HCT116 (cell line): ENCODE measurements at regions of chr9 and their contacts with region 1.

Region 1: DNA sequence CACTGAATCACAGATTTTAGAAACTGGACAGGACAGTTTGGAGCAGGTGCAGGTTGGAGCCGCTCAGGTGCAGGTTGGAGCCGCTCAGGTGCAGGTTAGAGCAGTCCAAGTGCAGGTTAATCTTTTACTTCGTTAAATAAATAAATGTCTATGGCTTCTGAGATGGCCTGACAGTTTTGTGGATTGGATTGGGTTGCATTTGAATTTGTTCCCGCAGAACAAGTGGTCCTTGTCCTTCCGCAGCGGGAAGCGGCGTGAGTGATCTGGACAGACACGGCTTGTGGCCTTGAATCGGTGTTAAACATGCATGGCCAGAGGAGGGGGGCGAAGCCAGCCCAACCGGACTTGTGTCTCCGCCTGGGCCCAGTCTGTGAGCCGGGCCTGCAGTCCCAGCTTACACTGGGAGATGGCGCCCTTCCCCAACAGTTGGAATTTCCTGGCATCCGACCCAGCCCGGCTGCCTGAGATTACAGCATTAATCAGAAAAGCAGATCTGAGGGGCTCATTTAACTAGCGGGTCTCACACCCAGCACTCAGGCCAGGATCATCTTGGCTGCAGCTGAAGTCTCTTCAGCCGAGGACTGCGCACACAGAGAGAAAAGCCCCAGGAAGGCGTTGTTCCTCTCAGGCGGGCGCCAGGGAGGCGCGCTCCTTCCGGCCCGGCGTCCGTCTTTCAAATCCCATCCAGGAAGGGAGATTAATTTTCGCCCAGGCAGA is 1.5 kb upstream of the OLFM1 start:
- DNase-seq: peak; percentile 54
- ATAC-seq: peak; percentile 77
- H3K4me3 ChIP-seq: peak overlapping the region in 1 of 2 experiments; percentile 15; a peak in 1 of 4 replicates
- H3K27ac ChIP-seq: no peak overlapping the region
- H3K4me1 ChIP-seq: peaks cover 4 to 5% of the 10 kb centered on the region in 2 experiments; a peak in 2 of 4 replicates
- H3K27me3 ChIP-seq: peaks cover 20% of the 10 kb centered on the region; the same call in 1 of the 2 replicates
- CTCF ChIP-seq: peak; percentile 92 to 98 (median 95)
- POLR2A ChIP-seq: no peak
- RAD21 ChIP-seq: peak; percentile 98

Region 2: GRCh38 chr9:135037521-135038250 is 48.3 kb before region 1 on chr9:
- CTCF ChIA-PET with region 1: no interaction called
- POLR2A ChIA-PET with region 1: no interaction called
- RAD21 ChIA-PET with region 1: no interaction called
- intact Hi-C with region 1: no loop called
- DNase-seq: no peak
- ATAC-seq: no peak
- H3K4me3 ChIP-seq: no peak overlapping the region
- H3K27ac ChIP-seq: no peak overlapping the region
- H3K4me1 ChIP-seq: no peaks in the 10 kb centered on the region
- H3K27me3 ChIP-seq: peaks cover 47% of the 10 kb centered on the region
- CTCF ChIP-seq: no peak
- POLR2A ChIP-seq: no peak
- RAD21 ChIP-seq: no peak

Region 3: DNA sequence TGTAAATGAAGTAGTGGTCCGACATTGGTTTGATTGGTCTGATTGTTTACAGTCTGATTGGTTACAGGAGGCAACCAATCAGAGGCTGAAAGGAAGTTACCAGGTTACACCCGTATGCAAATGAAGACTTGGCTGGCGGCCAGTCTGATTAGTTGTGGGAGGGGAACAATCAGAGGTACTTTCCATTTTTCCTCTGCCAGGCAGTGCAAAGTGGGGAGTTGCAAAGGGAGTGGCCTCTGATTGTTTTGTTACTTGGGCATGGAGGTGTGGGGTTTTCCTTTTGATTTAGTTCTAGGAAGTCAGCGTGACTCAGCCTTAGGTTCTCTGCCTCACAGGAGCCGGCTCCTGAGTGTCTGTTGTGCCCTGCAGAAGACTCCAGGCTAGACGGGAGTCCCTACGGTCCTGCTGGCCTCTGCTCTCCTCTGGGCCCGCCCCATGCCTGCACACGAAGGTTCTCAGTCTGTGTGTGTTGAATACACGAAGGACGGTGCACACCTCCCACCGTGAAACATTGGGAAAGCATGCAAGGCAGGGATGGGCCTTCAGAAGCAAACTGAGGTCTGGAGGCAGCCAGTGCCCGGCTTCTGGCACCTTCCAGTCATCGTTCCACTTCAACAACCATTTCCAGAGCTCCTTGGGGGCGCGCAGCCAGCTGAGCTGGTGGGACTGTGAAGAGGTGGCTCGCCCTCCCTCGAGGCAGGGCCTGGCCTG is 44.4 kb after region 1 on chr9:
- CTCF ChIA-PET with region 1: no interaction called
- POLR2A ChIA-PET with region 1: no interaction called
- RAD21 ChIA-PET with region 1: no interaction called
- intact Hi-C with region 1: no loop called
- DNase-seq: peak; percentile 63
- ATAC-seq: peak; percentile 68
- H3K4me3 ChIP-seq: no peak overlapping the region
- H3K27ac ChIP-seq: peak overlapping the region; percentile 2; the same call in 1 of the 2 replicates
- H3K4me1 ChIP-seq: peaks cover 7 to 26% of the 10 kb centered on the region in 2 experiments; a peak in 3 of 4 replicates
- H3K27me3 ChIP-seq: no peaks in the 10 kb centered on the region
- CTCF ChIP-seq: no peak
- POLR2A ChIP-seq: no peak
- RAD21 ChIP-seq: no peak

Region 4: GRCh38 chr9:135166566-135166965 is 80.6 kb after region 1 on chr9:
- CTCF ChIA-PET with region 1: no interaction called
- POLR2A ChIA-PET with region 1: no interaction called
- RAD21 ChIA-PET with region 1: no interaction called
- intact Hi-C with region 1: loop called (anchors 1 kb)
- DNase-seq: peak; percentile 7
- ATAC-seq: peak; percentile 77
- H3K4me3 ChIP-seq: no peak overlapping the region
- H3K27ac ChIP-seq: no peak overlapping the region
- H3K4me1 ChIP-seq: peaks cover 2 to 10% of the 10 kb centered on the region in 2 experiments; a peak in 2 of 4 replicates
- H3K27me3 ChIP-seq: peaks cover 41% of the 10 kb centered on the region
- CTCF ChIP-seq: peak; percentile 35 to 48 (median 37); a peak in 5 of 6 replicates
- POLR2A ChIP-seq: no peak
- RAD21 ChIP-seq: peak; percentile 33; the same call in 1 of the 2 replicates

Region 5: DNA sequence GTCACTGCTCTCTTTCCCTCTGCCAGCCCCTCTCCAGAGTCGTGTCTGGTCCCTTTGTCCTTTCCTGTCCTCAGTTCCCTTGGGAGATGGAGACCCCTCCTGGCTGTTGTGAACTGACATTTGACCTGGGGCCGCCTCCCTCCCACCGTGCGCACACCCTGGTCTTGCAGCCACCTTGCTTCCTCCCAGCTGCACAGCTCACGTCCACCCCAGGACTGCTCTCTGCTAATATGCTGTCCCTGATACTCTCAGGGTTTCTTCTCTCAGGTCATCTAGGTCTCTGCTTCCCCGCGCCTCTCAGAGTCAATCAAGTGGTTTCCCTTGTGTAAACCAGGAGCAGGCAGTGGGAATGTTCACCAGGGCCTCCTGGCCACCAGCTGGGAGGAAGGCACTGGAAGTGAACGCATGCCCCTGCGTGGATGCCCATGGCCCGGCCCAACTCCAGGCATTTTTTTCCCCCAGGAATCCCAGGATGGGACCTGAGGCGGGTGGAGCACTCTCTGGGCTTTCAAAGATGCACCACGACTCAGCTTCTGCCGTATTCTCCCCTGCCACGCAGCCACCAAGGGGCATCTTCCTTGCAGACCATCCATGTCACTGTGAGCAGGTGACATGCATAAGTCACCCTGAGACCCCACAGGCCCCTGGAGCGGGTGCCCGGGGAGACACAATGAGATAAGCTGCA is 143.9 kb after region 1 on chr9:
- CTCF ChIA-PET with region 1: no interaction called
- POLR2A ChIA-PET with region 1: no interaction called
- RAD21 ChIA-PET with region 1: no interaction called
- intact Hi-C with region 1: no loop called
- DNase-seq: no peak
- ATAC-seq: no peak
- H3K4me3 ChIP-seq: no peak overlapping the region
- H3K27ac ChIP-seq: no peak overlapping the region
- H3K4me1 ChIP-seq: no peaks in the 10 kb centered on the region
- H3K27me3 ChIP-seq: peaks cover 42% of the 10 kb centered on the region; the same call in 1 of the 2 replicates
- CTCF ChIP-seq: no peak
- POLR2A ChIP-seq: no peak
- RAD21 ChIP-seq: no peak

Region 6: DNA sequence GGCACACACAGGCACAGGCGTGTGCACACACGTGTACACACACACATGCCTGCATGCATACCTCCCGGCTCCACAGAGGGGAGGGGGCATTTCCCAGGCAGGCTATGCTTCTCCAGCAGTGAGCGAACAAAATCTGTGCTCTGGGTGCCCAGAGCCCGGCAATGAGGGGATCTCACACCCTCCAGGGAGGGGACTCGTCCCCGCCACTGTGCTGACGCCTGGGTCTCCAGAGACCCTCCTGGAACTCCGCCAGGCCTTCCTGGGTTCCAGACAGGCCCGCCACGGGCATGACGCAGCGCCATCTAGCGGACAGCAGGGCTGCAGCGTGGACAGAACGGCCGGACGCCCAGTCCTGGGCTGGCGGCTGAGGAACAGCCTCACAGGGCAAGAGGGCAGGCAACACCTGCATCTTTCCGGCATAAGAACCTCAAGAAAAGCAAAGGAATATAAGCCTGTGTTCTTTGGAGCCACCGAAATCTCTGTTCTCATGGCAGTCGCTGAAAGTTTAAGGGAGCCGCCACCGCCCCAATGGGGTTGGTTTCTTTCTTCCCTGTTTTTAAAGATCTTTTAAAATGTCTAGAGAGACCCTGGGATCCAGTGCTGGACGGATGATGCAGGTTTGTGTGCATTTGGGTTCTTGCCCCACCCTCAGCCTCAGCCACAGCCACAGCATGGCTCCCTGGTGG is 258.0 kb after region 1 on chr9:
- CTCF ChIA-PET with region 1: interaction called, 3 read pairs
- POLR2A ChIA-PET with region 1: no interaction called
- RAD21 ChIA-PET with region 1: no interaction called
- intact Hi-C with region 1: loop called (anchors 1 kb)
- DNase-seq: peak; percentile 10
- ATAC-seq: peak; percentile 92
- H3K4me3 ChIP-seq: no peak overlapping the region
- H3K27ac ChIP-seq: no peak overlapping the region
- H3K4me1 ChIP-seq: no peaks in the 10 kb centered on the region
- H3K27me3 ChIP-seq: no peaks in the 10 kb centered on the region
- CTCF ChIP-seq: peak; percentile 92 to 99 (median 98)
- POLR2A ChIP-seq: no peak
- RAD21 ChIP-seq: peak; percentile 93

Region 7: DNA sequence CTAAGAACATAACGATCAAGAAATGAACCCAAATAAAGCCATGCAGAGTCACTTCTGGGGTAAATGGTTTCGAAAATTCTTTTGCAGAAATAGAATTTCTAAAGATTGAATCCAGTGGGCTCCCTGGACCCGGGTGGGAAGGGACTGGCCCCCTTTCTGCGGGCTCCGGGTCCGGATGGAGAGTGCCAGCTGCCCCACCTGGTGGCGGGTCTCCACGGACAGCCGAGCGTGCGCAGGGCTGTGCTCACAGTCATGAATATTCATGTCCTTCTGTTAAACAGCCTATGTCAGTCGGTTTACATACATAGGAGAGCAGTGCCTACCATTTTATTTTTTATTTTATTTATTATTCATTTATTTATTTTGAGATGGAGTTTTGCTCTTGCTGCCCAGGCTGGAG is 388.9 kb after region 1 on chr9:
- CTCF ChIA-PET with region 1: no interaction called
- POLR2A ChIA-PET with region 1: no interaction called
- RAD21 ChIA-PET with region 1: no interaction called
- intact Hi-C with region 1: loop called (anchors 1 kb)
- DNase-seq: peak; percentile 19
- ATAC-seq: peak; percentile 72
- H3K4me3 ChIP-seq: no peak overlapping the region
- H3K27ac ChIP-seq: no peak overlapping the region
- H3K4me1 ChIP-seq: peaks cover 15 to 35% of the 10 kb centered on the region in 2 experiments
- H3K27me3 ChIP-seq: no peaks in the 10 kb centered on the region
- CTCF ChIP-seq: peak; percentile 70 to 82 (median 75); a peak in 5 of 6 replicates
- POLR2A ChIP-seq: no peak
- RAD21 ChIP-seq: peak; percentile 76

Region 8: GRCh38 chr9:135961277-135961705 is 875.3 kb after region 1 on chr9 and contains the start of gene UBAC1:
- CTCF ChIA-PET with region 1: no interaction called
- POLR2A ChIA-PET with region 1: no interaction called
- RAD21 ChIA-PET with region 1: no interaction called
- intact Hi-C with region 1: loop called (anchors 10 kb)
- DNase-seq: peak; percentile 90
- ATAC-seq: peak; percentile 95
- H3K4me3 ChIP-seq: peak within 1 kb of the TSS; percentile 91 to 98
- H3K27ac ChIP-seq: peak within 1 kb of the TSS; percentile 73
- H3K4me1 ChIP-seq: peaks cover 15 to 22% of the 10 kb centered on the region in 2 experiments
- H3K27me3 ChIP-seq: no peaks in the 10 kb centered on the region
- CTCF ChIP-seq: peak in 1 of 3 experiments; percentile 23; a peak in 3 of 6 replicates
- POLR2A ChIP-seq: no peak
- RAD21 ChIP-seq: no peak
- total RNA-seq, gene UBAC1: 54.8 TPM